GM10248 (cell line): ENCODE measurements at regions of chr9 and their contacts with region 1.

Region 1: GRCh38 chr9:110206389-110206788 is 1.6 kb downstream of the C9orf152 start:
- DNase-seq: no peak
- CTCF ChIP-seq: no peak

Region 2: GRCh38 chr9:110217656-110218099 is 11.3 kb after region 1 on chr9:
- CTCF ChIA-PET with region 1: interaction called, 14 read pairs
- POLR2A ChIA-PET with region 1: no interaction called
- DNase-seq: peak; percentile 41
- CTCF ChIP-seq: peak; percentile 70

Region 3: GRCh38 chr9:110427497-110428104 is 221.2 kb after region 1 on chr9:
- CTCF ChIA-PET with region 1: no interaction called
- POLR2A ChIA-PET with region 1: no interaction called
- DNase-seq: peak; percentile 45
- CTCF ChIP-seq: peak; percentile 68